HEK293T (cell line): ENCODE measurements at regions of chr7 and their contacts with region 1.

Region 1: GRCh38 chr7:82067628-82068261 is 297.9 kb upstream of the HGF start:
- DNase-seq: no peak

Region 2: GRCh38 chr7:82080254-82080927 is 12.6 kb after region 1 on chr7:
- CTCF ChIA-PET with region 1: interaction called, 11 read pairs
- POLR2A ChIA-PET with region 1: no interaction called
- DNase-seq: no peak